ENCODE measurements at regions of chr9 and their contacts with region 1.

Region 1: GRCh38 chr9:122827761-122828093 is 661 bp downstream of the PDCL start:
- DNase-seq: no peak
- ATAC-seq: peak; percentile 27 to 33
- H3K4me3 ChIP-seq: peak overlapping the region; percentile 97
- H3K27ac ChIP-seq: peak overlapping the region; percentile 99
- H3K4me1 ChIP-seq: peaks cover 2% of the 10 kb centered on the region
- H3K27me3 ChIP-seq: no peaks in the 10 kb centered on the region

Region 2: GRCh38 chr9:122092611-122093506 is 734.9 kb before region 1 on chr9 and contains the start of gene TTLL11:
- intact Hi-C with region 1: loop called in 1 of 4 experiments (anchors 10 kb)
- DNase-seq: peak; percentile 98 to 99 (median 99)
- ATAC-seq: peak; percentile 96 to 97
- H3K4me3 ChIP-seq: peak within 1 kb of the TSS; percentile 70
- H3K27ac ChIP-seq: peak within 1 kb of the TSS; percentile 59
- H3K4me1 ChIP-seq: peaks cover 17% of the 10 kb centered on the region
- H3K27me3 ChIP-seq: no peaks in the 10 kb centered on the region
- total RNA-seq, gene TTLL11: 3.5 to 8.6 (median 5.8) TPM

Region 3: DNA sequence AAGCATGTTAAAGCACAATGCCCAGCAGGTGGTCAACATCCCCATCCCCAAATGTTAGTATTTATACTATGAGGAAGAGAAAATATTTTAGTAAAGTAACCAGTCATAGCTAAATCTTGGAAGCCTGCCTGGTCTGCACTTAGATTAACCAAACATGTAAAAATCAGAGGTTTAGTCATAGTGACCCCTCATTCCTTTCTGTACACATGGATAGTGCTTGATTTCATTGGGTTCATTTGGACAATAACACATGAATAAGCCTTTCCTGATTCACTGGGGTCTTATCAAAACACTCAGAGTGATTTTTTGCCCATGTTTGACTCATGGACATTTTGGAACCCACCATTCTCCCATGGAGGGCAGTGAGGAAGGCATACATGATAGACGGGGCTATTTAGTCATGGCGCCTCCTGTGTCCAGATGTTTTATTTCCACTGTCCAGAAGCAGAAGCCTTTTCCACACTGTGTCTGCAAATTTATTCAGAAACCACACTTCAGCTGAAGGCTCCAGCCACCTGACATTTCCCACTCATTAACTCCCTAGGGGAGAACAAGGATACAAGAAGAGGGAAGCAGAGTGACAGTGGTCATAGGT is 382.5 kb before region 1 on chr9:
- intact Hi-C with region 1: no loop called
- DNase-seq: no peak
- ATAC-seq: no peak
- H3K4me3 ChIP-seq: no peak overlapping the region
- H3K27ac ChIP-seq: no peak overlapping the region
- H3K4me1 ChIP-seq: no peaks in the 10 kb centered on the region
- H3K27me3 ChIP-seq: no peaks in the 10 kb centered on the region